Dorsolateral prefrontal cortex (tissue), 120 donors: ENCODE measurements at regions of chr6 and their contacts with region 1.

Region 1: DNA sequence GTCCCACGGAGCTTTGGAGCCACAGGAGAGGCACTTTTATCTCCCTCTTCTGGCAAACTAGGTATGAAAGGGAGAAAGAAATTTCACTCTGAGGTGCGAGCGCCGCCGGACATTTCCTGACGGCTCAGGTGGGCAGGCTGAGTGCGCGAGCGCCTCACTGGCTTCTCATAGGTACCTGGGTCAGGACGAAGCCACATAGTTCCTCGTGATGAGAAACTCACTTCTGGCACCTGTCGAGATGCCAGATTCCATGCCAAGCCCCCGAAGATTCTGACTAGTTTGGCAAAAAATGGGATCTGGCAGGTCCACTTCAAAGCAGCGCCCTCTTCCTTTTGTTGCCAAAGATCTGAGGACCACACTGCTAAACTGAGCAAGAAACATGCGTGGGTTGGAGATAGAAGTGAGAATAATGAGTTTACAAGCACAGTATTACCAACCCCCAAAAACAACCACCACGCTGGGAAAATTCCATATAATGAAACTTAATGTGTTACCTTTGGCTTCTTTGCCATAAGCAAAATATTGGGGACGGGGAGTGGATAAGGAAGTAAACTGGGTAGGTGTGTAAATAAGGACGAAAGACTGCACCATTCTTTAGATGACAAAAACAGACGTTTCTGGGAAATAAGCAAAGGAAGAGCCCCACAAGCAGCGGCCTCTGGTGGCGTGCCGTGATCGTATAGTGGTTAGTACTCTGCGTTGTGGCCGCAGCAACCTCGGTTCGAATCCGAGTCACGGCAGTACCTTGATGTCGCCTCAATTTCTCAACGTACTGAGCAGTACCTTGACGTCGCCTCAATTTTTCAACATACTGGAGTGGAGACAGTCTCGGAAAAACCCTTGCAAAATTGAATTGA is 89.8 kb upstream of the PRSS16 start:
- DNase-seq: peak in 8 of 10 donors; percentile 54 to 77 (median 68)
- H3K4me3 ChIP-seq: peak overlapping the region; percentile 26 to 69 (median 50)
- H3K27ac ChIP-seq: peak overlapping the region in 4 of 59 donors; percentile 14 to 51 (median 40)
- H3K27me3 ChIP-seq: no peaks in the 10 kb centered on the region
- CTCF ChIP-seq: peak; percentile 19 to 72 (median 51)

Region 2: DNA sequence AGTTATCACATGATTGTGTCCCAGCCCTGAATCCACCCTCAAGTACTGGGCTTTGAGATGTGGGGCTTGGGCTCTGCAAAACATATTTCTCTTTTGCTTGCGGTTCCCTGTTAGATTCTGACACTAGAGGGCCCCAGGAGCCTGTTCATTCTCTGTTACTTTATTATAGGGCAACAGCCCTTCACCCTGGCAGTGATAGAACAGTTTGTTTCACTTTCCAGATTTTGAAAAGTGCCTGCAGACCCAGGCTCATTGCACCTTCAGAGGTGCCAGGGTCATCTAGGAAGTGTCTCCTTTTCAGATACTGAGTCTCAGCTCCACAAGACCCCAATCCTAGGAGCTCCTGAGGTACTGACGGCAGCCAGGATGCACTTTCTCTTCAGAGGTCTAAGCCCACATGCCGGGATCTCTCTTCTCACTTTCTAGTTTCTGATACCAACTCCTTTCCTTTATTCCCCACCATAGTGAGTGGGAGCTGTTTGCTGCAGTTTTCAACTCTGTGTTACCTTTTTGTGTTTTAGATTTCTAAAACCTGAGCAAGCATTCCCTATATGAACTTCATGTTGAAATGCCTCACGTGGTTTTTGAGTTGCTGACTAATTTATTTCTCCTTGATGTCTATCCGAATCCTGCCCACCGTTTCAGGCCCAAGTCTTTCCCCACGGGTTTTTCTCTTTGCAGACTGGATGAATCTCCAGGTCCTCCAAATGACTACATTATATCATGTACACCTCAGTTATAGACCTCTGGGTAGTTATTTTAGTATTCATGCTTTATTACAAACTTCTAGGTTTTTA is 550.1 kb before region 1 on chr6:
- intact Hi-C with region 1: loop called (anchors 10 kb)
- DNase-seq: peak in 2 of 10 donors; percentile 46 to 60
- H3K4me3 ChIP-seq: peak overlapping the region in 34 of 59 donors; percentile 15 to 53 (median 28)
- H3K27ac ChIP-seq: no peak overlapping the region
- H3K27me3 ChIP-seq: peaks cover 0 to 8% (median 0%) of the 10 kb centered on the region in 45 donors
- CTCF ChIP-seq: peak; percentile 32 to 82 (median 66)

Region 3: DNA sequence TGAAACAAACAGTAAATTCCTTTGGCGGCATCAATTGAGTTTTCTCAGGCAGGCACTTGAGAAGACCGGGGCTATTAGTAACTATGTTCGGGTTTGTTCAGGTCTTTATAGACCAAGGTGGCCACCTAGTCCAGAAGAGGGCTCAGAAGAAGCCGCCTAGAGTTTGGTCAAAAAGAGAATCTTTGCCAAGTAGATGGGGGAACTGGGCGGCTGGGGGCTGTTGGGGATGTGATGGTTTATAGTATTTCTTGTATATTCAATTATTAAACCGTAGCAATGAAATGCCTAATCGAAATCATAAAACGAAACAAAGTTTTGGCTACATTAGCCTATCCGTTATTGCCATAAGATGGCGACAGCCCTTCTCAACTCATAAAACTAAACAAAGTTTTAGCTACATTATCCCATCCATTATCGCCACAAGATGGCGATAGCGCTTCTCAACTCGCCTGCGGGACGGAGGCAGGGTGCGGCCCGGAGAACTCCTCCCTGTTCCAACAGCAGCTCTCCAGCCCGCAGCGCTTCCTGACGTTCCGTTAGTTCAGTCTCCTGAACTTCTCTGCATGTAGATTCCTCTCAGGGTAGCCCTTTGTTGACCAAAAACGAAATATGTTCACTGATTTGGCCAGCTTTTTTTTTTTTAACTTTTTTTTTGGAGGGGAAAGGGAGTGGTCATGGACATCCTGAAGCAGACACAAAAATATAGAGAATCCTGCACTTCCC is 30.7 kb before region 1 on chr6:
- intact Hi-C with region 1: loop called in 1 of 2 experiments (anchors 2 kb)
- DNase-seq: peak in 9 of 10 donors; percentile 43 to 76 (median 68)
- H3K4me3 ChIP-seq: peak overlapping the region in 53 of 59 donors; percentile 0 to 57 (median 36)
- H3K27ac ChIP-seq: peak overlapping the region in 4 of 59 donors; percentile 2 to 55 (median 26)
- H3K27me3 ChIP-seq: peaks cover 0 to 33% (median 5%) of the 10 kb centered on the region in 45 donors
- CTCF ChIP-seq: peak; percentile 46 to 93 (median 80)

Region 4: DNA sequence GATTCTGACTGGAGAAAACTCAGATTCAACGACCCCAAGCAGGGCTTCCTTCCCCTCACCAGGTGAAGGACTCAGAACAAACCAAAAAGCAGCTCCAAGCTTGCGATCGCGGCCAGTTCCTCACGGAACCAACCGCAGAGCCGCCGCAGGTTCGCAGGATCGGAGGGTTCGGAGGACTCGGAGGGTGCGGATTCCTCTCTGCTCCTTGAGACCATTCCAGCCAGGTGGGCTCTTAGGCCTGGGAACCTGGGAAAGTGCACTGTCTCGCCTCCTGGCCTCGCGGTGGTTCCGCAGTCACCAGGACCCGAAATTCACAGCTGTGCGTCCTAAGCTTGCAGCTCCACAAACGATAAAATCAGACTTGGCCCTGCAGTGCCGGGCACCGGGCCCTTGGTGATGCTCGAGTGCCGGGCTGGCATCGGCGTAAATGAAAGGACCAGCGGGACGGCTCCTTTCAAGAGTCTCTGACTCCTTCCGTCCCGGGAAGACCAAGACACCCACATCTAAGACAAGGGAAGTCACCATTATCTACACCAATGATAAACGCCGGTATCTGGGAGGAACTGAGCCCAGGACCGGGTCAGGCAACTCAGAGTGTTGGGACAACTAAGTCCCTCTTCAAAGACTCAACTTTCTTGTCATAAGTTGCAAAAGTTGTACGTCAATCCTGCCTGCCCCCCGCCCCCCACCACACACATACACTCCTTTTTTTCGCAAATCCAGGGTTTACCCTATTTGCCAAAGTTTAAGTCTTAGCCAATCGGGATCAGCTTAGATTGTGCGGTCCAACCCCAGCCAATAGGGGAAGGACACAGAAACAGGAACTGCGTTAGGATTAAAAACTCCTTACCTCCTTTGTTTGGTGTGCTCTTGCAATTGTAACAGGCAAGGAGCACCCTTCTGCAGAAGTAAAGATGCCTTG is 20.1 kb after region 1 on chr6:
- intact Hi-C with region 1: loop called in 1 of 2 experiments (anchors 2 kb)
- DNase-seq: peak; percentile 63 to 89 (median 83)
- H3K4me3 ChIP-seq: peak overlapping the region; percentile 55 to 100 (median 95)
- H3K27ac ChIP-seq: peak overlapping the region in 53 of 59 donors; percentile 28 to 91 (median 78)
- H3K27me3 ChIP-seq: peaks cover 0 to 18% (median 0%) of the 10 kb centered on the region in 45 donors
- CTCF ChIP-seq: peak in 42 of 56 donors; percentile 4 to 55 (median 35)

Region 5: DNA sequence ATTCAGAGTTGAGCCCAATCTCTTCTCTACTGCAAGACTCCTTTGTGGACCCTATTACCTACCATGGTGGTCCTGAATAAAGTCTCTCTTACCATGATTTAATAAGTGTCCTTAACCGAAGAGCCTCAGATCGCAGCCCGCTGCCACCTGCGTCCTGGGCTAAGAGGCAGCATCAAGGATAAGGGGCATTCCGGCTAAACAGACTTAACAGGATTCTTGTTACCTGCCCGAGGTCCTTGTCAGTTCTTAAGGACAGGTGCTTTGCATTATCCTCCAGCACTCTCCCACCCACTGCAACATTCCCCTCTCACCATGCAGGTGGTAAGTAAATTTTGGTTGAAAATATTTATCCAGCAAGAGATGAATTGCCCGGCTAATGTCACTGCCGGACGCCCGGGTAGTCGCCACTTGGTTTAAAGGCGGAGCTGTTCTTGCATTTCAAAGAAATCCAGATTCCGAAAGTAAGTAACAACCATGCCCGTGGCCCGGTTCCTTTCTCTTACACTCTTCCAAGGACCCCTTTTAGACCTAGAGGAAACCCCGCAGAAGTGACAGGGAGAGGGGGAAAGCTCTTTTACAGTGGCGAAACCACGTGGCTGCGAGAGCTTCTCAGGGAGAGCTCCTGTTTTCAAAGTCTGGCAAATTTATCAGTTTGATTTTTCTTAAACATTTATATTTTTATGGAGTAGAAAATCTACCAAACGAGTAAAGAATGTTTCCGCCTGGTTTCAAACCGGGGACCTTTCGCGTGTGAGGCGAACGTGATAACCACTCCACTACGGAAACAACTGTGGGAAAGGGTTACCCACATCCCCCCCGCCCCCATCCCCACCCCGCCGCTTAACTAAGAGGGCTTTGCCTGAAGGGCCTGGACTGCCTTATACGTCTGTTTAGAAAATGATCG is 47.9 kb after region 1 on chr6:
- intact Hi-C with region 1: no loop called
- DNase-seq: no peak
- H3K4me3 ChIP-seq: peak overlapping the region in 3 of 59 donors; percentile 0 to 6 (median 3)
- H3K27ac ChIP-seq: no peak overlapping the region
- H3K27me3 ChIP-seq: peaks cover 4 to 78% (median 55%) of the 10 kb centered on the region in 45 donors
- CTCF ChIP-seq: no peak

Region 6: DNA sequence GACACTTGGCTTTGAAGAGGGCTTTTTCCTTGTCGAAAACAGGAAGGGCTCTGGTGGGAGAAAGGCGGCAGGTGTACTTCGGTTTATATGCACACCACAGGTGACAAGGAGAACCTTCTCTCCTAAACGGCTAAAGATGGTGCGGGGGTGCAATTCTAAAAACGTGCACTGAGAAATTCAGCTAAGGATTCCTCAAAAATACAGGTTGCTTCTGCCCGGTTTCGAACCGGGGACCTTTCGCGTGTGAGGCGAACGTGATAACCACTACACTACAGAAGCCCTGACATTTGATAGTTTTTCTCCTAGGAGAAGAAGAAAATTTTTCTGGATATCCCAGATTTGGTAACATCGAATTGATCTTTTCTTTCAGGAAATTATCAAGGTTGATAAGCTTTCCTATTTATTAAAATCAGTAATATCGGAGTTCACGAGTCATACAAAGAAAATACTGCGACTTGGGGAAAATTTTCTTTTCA is 122.4 kb after region 1 on chr6:
- intact Hi-C with region 1: no loop called
- DNase-seq: no peak
- H3K4me3 ChIP-seq: peak overlapping the region in 3 of 59 donors; percentile 8 to 12 (median 8)
- H3K27ac ChIP-seq: no peak overlapping the region
- H3K27me3 ChIP-seq: peaks cover 13 to 100% (median 98%) of the 10 kb centered on the region in 45 donors
- CTCF ChIP-seq: no peak

Region 7: GRCh38 chr6:27795697-27796494 is 638.2 kb after region 1 on chr6:
- intact Hi-C with region 1: loop called in 1 of 2 experiments (anchors 2 kb)
- DNase-seq: peak in 1 of 10 donors; percentile 40
- H3K4me3 ChIP-seq: peak overlapping the region in 1 of 59 donors; percentile 8
- H3K27ac ChIP-seq: no peak overlapping the region
- H3K27me3 ChIP-seq: peaks cover 0 to 15% (median 0%) of the 10 kb centered on the region in 45 donors
- CTCF ChIP-seq: peak; percentile 63 to 90 (median 82)

Region 8: GRCh38 chr6:28355743-28356665 is 1198.3 kb after region 1 on chr6:
- intact Hi-C with region 1: loop called in 1 of 2 experiments (anchors 10 kb)
- DNase-seq: peak; percentile 44 to 88 (median 77)
- H3K4me3 ChIP-seq: peak overlapping the region; percentile 41 to 89 (median 70)
- H3K27ac ChIP-seq: peak overlapping the region in 58 of 59 donors; percentile 27 to 96 (median 87)
- H3K27me3 ChIP-seq: no peaks in the 10 kb centered on the region
- CTCF ChIP-seq: peak; percentile 62 to 93 (median 82)